B cell (primary cell): ENCODE measurements at regions of chr12 and their contacts with region 1.

Region 1: DNA sequence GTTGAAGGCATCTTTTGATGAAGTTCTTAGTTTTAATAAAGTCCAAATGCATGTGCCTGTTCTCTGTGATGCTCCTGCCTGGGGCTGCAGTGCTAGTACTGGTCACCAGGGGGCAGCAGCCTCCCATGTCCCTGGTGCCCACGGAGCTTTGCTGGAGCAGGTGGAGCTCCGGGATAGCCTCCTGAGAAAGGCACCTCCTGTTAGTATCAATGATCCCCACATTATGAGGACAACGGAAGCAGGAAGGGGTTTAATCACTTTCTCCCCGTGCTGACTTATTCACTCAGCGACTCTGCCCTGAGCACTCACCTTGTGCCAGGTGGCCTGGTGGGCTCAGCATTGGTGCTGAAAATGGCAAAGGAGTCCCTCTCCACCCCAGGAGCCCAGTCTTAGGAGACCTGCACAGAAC is 123.0 kb upstream of the PZP start:
- DNase-seq: peak; percentile 74
- ATAC-seq: peak; percentile 84
- H3K4me3 ChIP-seq: no peak overlapping the region
- H3K4me3 Mint-ChIP-seq: no peak overlapping the region
- H3K27ac ChIP-seq: no peak overlapping the region
- H3K27ac Mint-ChIP-seq: no peak overlapping the region
- H3K4me1 ChIP-seq: peaks cover 0 to 12% of the 10 kb centered on the region in 2 donors
- H3K4me1 Mint-ChIP-seq: peaks cover 7% of the 10 kb centered on the region
- H3K27me3 ChIP-seq: peaks cover 0 to 3% (median 0%) of the 10 kb centered on the region in 4 experiments
- H3K27me3 Mint-ChIP-seq: no peaks in the 10 kb centered on the region
- CTCF ChIP-seq: peak; percentile 98

Region 2: GRCh38 chr12:9347328-9348127 is 16.3 kb after region 1 on chr12:
- CTCF ChIA-PET with region 1: interaction called, 12 read pairs
- POLR2A ChIA-PET with region 1: no interaction called
- intact Hi-C with region 1: no loop called
- DNase-seq: no peak
- ATAC-seq: no peak
- H3K4me3 ChIP-seq: no peak overlapping the region
- H3K4me3 Mint-ChIP-seq: no peak overlapping the region
- H3K27ac ChIP-seq: no peak overlapping the region
- H3K27ac Mint-ChIP-seq: no peak overlapping the region
- H3K4me1 ChIP-seq: no peaks in the 10 kb centered on the region
- H3K4me1 Mint-ChIP-seq: no peaks in the 10 kb centered on the region
- H3K27me3 ChIP-seq: no peaks in the 10 kb centered on the region
- H3K27me3 Mint-ChIP-seq: no peaks in the 10 kb centered on the region
- CTCF ChIP-seq: no peak

Region 3: GRCh38 chr12:9464408-9464807 is 133.2 kb after region 1 on chr12:
- CTCF ChIA-PET with region 1: interaction called, 12 read pairs
- POLR2A ChIA-PET with region 1: no interaction called
- intact Hi-C with region 1: no loop called
- DNase-seq: no peak
- ATAC-seq: no peak
- H3K4me3 ChIP-seq: no peak overlapping the region
- H3K4me3 Mint-ChIP-seq: no peak overlapping the region
- H3K27ac ChIP-seq: no peak overlapping the region
- H3K27ac Mint-ChIP-seq: no peak overlapping the region
- H3K4me1 ChIP-seq: peaks cover 0 to 2% of the 10 kb centered on the region in 2 donors
- H3K4me1 Mint-ChIP-seq: peaks cover 3% of the 10 kb centered on the region
- H3K27me3 ChIP-seq: no peaks in the 10 kb centered on the region
- H3K27me3 Mint-ChIP-seq: no peaks in the 10 kb centered on the region
- CTCF ChIP-seq: no peak

Region 4: DNA sequence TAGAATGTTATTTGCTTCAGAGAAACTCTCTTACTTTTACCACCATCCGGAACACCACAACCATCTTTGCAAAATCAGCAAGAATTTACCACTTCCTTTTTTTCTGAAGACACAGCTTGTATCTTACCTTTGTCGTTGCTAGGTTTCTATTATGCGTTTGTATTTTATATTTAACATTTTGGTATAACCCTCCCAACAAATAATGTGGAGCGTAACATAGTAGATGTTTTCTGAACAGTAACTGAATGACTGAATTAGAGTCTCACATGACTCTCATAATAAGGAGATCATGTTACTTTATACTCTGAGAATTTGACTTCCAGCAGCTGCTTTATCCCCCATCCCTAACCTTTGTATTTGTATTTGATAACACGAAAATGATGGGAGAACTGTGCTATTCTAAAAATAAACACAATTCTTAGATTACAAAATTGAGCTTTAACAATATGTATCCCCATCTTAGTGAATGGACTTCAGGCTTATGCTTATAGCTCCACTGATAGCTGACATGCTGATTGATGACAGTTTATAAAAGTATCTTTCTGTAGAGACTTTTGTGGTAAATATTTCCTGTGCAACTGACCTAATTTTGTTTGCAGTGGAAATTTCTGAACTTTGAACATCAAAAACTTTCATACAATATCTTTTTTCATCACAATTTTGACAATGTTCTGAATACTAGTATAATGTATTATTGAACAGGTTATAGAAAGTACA is 284.4 kb after region 1 on chr12:
- CTCF ChIA-PET with region 1: interaction called, 4 read pairs
- POLR2A ChIA-PET with region 1: no interaction called
- intact Hi-C with region 1: loop called (anchors 5 kb)
- DNase-seq: peak; percentile 65
- ATAC-seq: peak; percentile 74
- H3K4me3 ChIP-seq: peak overlapping the region in 1 of 5 experiments; percentile 18
- H3K4me3 Mint-ChIP-seq: peak overlapping the region; percentile 64
- H3K27ac ChIP-seq: peak overlapping the region; percentile 60 to 81
- H3K27ac Mint-ChIP-seq: peak overlapping the region; percentile 83
- H3K4me1 ChIP-seq: peaks cover 35 to 39% of the 10 kb centered on the region in 2 donors
- H3K4me1 Mint-ChIP-seq: peaks cover 49% of the 10 kb centered on the region
- H3K27me3 ChIP-seq: no peaks in the 10 kb centered on the region
- H3K27me3 Mint-ChIP-seq: no peaks in the 10 kb centered on the region
- CTCF ChIP-seq: no peak